Activated T-helper 1 cell treated with anti-CD3 and anti-CD28 coated beads, Interleukin-12 subunit alpha, Interleukin-12 subunit beta, Interleukin-2, Interleukin-4 antibody, amounts not matched to agents 30 ng/mL and 10 ng/mL and 1 ng/mL, durations not matched to agents 14 hours and 24 hours and 36 hours (primary cell): ENCODE measurements at regions of chr5 and their contacts with region 1.

Region 1: DNA sequence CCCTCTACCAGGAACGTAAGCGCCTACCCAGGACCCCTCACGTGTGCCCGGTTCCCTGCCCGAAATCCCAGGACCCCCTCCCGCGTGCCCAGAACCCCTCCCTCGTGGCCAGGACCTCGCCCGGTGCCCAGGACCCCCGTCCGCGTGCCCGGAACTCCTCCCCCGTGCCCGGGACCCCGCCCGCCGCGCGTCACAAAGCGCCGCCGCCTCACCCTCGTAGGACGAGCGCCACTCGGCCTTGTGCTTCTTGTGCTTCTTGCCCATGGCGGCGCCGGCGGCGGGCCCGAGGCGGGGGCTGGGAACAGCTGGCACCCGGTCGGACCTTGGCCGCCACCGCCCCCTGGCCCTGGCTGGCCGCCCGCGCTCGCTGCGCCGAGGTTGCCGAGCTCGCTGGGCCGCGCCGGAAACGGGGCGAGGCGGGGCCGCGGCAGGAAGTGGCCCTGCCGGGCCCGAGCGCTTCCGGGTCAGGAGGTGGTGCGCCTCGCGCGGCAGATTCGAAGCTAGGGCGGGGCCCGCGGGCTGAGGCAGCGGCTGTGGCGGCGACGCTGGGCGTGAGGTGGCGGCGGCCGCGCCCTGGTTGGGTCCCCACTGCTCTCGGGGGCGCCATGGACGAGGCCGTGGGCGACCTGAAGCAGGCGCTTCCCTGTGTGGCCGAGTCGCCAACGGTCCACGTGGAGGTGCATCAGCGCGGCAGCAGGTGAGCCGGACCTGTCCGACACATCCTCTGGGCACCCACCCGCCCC is at the starts of genes BRD9 and TRIP13:
- DNase-seq: peak; percentile 84
- H3K4me3 Mint-ChIP-seq: peak within 1 kb of the TSS; percentile 92
- H3K27ac Mint-ChIP-seq: peak within 1 kb of the TSS; percentile 90
- H3K4me1 Mint-ChIP-seq: peaks cover 26% of the 10 kb centered on the region
- H3K27me3 Mint-ChIP-seq: no peaks in the 10 kb centered on the region
- total RNA-seq, gene BRD9: 77.8 and 81.6 TPM in 2 replicates
- total RNA-seq, gene TRIP13: 37.2 and 38.4 TPM in 2 replicates

Region 2: GRCh38 chr5:691817-692528 is 200.6 kb before region 1 on chr5:
- intact Hi-C with region 1: loop called (anchors 5 kb)
- DNase-seq: no peak
- H3K4me3 Mint-ChIP-seq: peak overlapping the region; percentile 54
- H3K27ac Mint-ChIP-seq: no peak overlapping the region
- H3K4me1 Mint-ChIP-seq: no peaks in the 10 kb centered on the region
- H3K27me3 Mint-ChIP-seq: no peaks in the 10 kb centered on the region

Region 3: GRCh38 chr5:776792-777711 is 115.5 kb before region 1 on chr5:
- intact Hi-C with region 1: loop called (anchors 5 kb)
- DNase-seq: no peak
- H3K4me3 Mint-ChIP-seq: no peak overlapping the region
- H3K27ac Mint-ChIP-seq: no peak overlapping the region
- H3K4me1 Mint-ChIP-seq: no peaks in the 10 kb centered on the region
- H3K27me3 Mint-ChIP-seq: peaks cover 2% of the 10 kb centered on the region

Region 4: GRCh38 chr5:945691-946551 is 53.4 kb after region 1 on chr5:
- intact Hi-C with region 1: no loop called
- DNase-seq: no peak
- H3K4me3 Mint-ChIP-seq: no peak overlapping the region
- H3K27ac Mint-ChIP-seq: no peak overlapping the region
- H3K4me1 Mint-ChIP-seq: no peaks in the 10 kb centered on the region
- H3K27me3 Mint-ChIP-seq: peaks cover 39% of the 10 kb centered on the region

Region 5: DNA sequence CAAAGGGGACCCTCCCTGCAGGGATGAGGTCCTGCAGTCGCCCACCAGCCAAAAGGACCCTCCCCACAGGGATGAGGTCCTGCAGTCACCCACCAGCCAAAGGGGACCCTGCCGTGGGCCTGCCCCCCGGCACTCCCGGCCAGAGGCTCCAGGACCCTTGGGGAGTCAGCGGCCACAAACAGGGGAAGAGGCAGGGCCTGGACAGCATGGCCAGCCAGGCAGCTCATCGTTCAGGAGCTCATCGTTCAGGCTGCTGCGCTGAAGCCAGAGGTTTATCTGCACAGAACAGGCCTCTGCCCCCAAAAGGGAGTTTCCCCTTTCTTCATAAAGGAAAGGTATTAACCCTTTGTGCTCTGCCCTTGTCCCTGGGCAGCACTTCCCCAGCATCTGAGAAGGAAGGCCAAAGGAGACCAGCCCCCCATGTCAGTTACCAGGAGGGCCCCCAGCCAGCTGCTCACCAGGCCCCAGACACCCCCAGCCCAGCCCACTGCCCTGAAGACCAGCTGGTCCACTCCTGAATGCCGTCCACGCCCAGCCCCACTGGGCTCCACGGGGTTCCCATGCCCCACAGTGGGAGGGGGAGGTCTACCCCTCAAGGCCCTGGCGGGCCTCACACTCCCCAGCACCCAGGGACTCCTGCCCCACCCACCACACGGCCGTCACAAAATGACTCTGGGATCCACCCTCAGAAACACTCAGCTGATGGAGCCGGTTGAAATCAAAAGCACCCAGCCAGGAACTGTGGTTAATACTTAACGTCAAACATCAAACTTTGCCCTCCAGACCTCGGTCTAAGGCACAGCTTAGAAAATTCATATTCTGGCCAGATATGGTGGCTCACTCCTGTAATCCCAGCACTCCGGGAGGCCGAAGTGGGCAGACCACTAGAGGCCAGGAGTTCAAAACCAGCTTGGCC is 213.0 kb after region 1 on chr5:
- intact Hi-C with region 1: loop called (anchors 10 kb)
- DNase-seq: peak; percentile 72
- H3K4me3 Mint-ChIP-seq: peak overlapping the region; percentile 80
- H3K27ac Mint-ChIP-seq: peak overlapping the region; percentile 90
- H3K4me1 Mint-ChIP-seq: peaks cover 54% of the 10 kb centered on the region
- H3K27me3 Mint-ChIP-seq: no peaks in the 10 kb centered on the region